ENCODE measurements at regions of chr4 and their contacts with region 1.

Region 1: DNA sequence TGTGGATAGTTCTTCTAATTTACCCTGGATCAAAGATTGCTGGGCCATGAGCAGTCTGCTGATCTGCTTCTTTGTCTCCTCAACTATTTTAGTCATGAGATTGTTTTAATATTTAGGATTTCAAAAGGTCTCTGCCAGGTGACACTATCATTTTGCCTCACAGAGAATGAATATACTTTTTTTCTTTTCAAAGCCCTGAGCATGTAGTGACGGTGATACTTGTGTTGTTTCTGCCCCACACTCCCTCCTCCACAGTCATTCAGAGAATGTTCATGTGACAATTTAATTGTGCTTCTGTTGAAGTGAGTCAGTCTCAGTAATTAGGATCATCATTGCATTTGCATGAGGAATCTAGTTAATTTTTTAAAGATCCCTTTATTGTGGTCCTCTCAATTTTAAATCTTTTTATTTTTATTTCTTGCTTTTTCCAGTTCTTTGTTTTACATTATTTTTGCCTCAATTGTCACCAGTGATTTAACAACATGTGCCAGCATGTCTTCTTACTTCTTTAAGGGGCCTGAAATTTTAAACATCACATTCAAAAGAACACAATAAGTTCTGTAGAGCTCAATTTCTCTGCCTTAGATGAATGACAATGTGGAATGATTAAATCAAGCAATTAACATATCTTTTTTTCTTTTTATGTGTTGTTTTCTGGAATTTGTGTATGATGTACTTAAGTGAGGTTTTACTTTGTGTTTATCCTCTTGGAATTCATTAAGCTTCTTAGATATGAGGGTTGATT is 12.3 kb downstream of the MMRN1 start:
- DNase-seq: no peak
- ATAC-seq: no peak
- H3K4me3 ChIP-seq: no peak overlapping the region
- H3K27ac ChIP-seq: no peak overlapping the region
- H3K4me1 ChIP-seq: no peaks in the 10 kb centered on the region
- H3K27me3 ChIP-seq: no peaks in the 10 kb centered on the region

Region 2: GRCh38 chr4:89158884-89159503 is 748.0 kb before region 1 on chr4:
- intact Hi-C with region 1: loop called in 2 of 4 experiments (anchors 10 kb)
- DNase-seq: no peak
- ATAC-seq: peak; percentile 19 to 37
- H3K4me3 ChIP-seq: no peak overlapping the region
- H3K27ac ChIP-seq: no peak overlapping the region
- H3K4me1 ChIP-seq: no peaks in the 10 kb centered on the region
- H3K27me3 ChIP-seq: no peaks in the 10 kb centered on the region

Region 3: GRCh38 chr4:89164400-89164799 is 742.5 kb before region 1 on chr4:
- intact Hi-C with region 1: loop called in 2 of 4 experiments (anchors 10 kb)
- DNase-seq: no peak
- ATAC-seq: no peak
- H3K4me3 ChIP-seq: no peak overlapping the region
- H3K27ac ChIP-seq: no peak overlapping the region
- H3K4me1 ChIP-seq: no peaks in the 10 kb centered on the region
- H3K27me3 ChIP-seq: no peaks in the 10 kb centered on the region

Measured in right cardiac atrium (tissue), 5 donors.